Mammary epithelial cell (primary cell): ENCODE measurements at regions of chr3 and their contacts with region 1.

Region 1: GRCh38 chr3:188954590-188955208 is 217.1 kb upstream of the TPRG1 start:
- DNase-seq: peak; percentile 72
- H3K4me3 ChIP-seq: no peak overlapping the region
- H3K27ac ChIP-seq: no peak overlapping the region
- H3K4me1 ChIP-seq: peaks cover 11% of the 10 kb centered on the region
- H3K27me3 ChIP-seq: no peaks in the 10 kb centered on the region
- CTCF ChIP-seq: peak; percentile 93 to 98

Region 2: GRCh38 chr3:187850331-187850921 is 1104.3 kb before region 1 on chr3:
- CTCF ChIA-PET with region 1: no interaction called
- dilution Hi-C with region 1: no loop called
- in situ Hi-C with region 1: no loop called
- intact Hi-C with region 1: loop called (anchors 10 kb)
- DNase-seq: no peak
- H3K4me3 ChIP-seq: no peak overlapping the region
- H3K27ac ChIP-seq: no peak overlapping the region
- H3K4me1 ChIP-seq: peaks cover 16% of the 10 kb centered on the region
- H3K27me3 ChIP-seq: no peaks in the 10 kb centered on the region
- CTCF ChIP-seq: no peak

Region 3: GRCh38 chr3:188270423-188270972 is 684.2 kb before region 1 on chr3:
- CTCF ChIA-PET with region 1: no interaction called
- dilution Hi-C with region 1: no loop called
- in situ Hi-C with region 1: no loop called
- intact Hi-C with region 1: loop called (anchors 5 kb)
- DNase-seq: peak; percentile 62
- H3K4me3 ChIP-seq: no peak overlapping the region
- H3K27ac ChIP-seq: peak overlapping the region; percentile 62
- H3K4me1 ChIP-seq: peaks cover 43% of the 10 kb centered on the region
- H3K27me3 ChIP-seq: no peaks in the 10 kb centered on the region
- CTCF ChIP-seq: no peak

Region 4: DNA sequence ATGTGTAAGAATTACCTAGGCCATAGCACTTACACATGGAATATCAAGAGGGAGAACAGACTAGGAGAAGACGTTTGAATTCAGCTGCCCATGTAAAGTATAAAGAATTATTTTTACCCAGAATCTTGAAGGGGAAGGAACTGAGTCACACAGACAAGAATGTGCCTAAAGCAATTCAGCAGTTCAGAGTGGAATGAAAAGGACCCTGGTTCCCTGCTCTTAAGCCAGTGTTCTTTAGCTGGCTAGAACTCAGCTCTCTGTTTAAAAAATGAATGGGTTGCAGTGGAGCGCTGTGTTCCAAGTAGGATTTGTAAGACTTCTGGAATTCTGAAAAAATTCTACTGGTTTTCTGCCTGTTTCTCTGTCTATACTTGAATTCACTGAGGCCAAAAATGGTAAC is 360.6 kb before region 1 on chr3:
- CTCF ChIA-PET with region 1: no interaction called
- dilution Hi-C with region 1: no loop called
- in situ Hi-C with region 1: no loop called
- intact Hi-C with region 1: no loop called
- DNase-seq: peak; percentile 72
- H3K4me3 ChIP-seq: no peak overlapping the region
- H3K27ac ChIP-seq: peak overlapping the region; percentile 67
- H3K4me1 ChIP-seq: peaks cover 37% of the 10 kb centered on the region
- H3K27me3 ChIP-seq: no peaks in the 10 kb centered on the region
- CTCF ChIP-seq: no peak

Region 5: GRCh38 chr3:188683032-188683521 is 271.6 kb before region 1 on chr3:
- CTCF ChIA-PET with region 1: no interaction called
- dilution Hi-C with region 1: no loop called
- in situ Hi-C with region 1: no loop called
- intact Hi-C with region 1: loop called (anchors 10 kb)
- DNase-seq: peak; percentile 43
- H3K4me3 ChIP-seq: no peak overlapping the region
- H3K27ac ChIP-seq: no peak overlapping the region
- H3K4me1 ChIP-seq: peaks cover 8% of the 10 kb centered on the region
- H3K27me3 ChIP-seq: no peaks in the 10 kb centered on the region
- CTCF ChIP-seq: no peak

Region 6: GRCh38 chr3:188853856-188854771 is 100.6 kb before region 1 on chr3:
- CTCF ChIA-PET with region 1: no interaction called
- dilution Hi-C with region 1: no loop called
- in situ Hi-C with region 1: no loop called
- intact Hi-C with region 1: loop called (anchors 5 kb)
- DNase-seq: peak; percentile 73
- H3K4me3 ChIP-seq: no peak overlapping the region
- H3K27ac ChIP-seq: peak overlapping the region; percentile 85
- H3K4me1 ChIP-seq: peaks cover 26% of the 10 kb centered on the region
- H3K27me3 ChIP-seq: no peaks in the 10 kb centered on the region
- CTCF ChIP-seq: no peak